Heart left ventricle (tissue), 16 donors: ENCODE measurements at regions of chr20 and their contacts with region 1.

Region 1: DNA sequence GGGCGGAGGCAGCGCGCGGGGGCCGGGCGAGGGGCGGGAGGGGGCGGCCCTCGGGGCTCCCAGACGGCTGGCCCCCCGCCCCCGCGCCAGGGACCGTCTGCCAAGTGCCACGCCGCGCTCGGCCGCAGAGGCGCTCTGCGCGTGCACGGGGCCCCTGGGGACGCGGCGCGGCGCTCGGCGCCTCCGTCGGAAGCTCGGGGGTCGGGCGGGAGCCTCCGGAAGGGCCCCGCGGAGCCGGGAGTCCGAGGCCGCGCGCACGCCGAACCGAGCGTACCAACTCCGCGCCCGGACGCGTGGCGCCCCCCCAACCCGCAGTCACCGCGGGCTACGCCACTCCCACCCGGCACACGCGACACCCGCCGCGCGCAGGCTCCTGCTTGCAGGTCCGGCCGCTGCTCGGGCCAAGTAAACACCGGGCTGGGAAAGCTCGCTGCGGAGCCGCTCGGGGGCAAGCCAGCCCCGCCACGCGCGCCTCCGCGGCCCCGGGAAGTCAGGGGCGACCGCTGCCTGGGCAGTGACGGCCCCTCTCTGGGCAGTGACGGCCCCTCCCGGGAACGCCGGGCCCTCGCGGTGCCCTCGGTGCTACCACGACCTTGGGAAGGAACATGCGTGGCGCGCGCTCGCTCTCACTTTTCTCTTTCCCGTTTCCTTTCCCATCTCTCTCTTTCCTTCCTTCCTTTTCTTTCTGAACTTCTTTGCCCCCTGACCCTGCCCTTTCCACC is 384 bp upstream of the PREX1 start:
- DNase-seq: peak; percentile 81 to 91 (median 86)
- ATAC-seq: peak; percentile 6 to 83 (median 73)
- H3K4me3 ChIP-seq: peak overlapping the region; percentile 45 to 89 (median 66)
- H3K27ac ChIP-seq: peak overlapping the region; percentile 19 to 92 (median 67)
- H3K4me1 ChIP-seq: peaks cover 0 to 69% (median 22%) of the 10 kb centered on the region in 12 donors
- H3K27me3 ChIP-seq: no peaks in the 10 kb centered on the region
- CTCF ChIP-seq: peak in 5 of 12 donors; percentile 12 to 30 (median 22)
- POLR2A ChIP-seq: peak in 1 of 2 donors; percentile 59

Region 2: GRCh38 chr20:48668451-48668952 is 159.7 kb before region 1 on chr20:
- intact Hi-C with region 1: no loop called
- DNase-seq: peak in 2 of 5 donors; percentile 45 to 49
- ATAC-seq: peak in 3 of 4 donors; percentile 45 to 77 (median 52)
- H3K4me3 ChIP-seq: no peak overlapping the region
- H3K27ac ChIP-seq: no peak overlapping the region
- H3K4me1 ChIP-seq: peaks cover 0 to 9% (median 2%) of the 10 kb centered on the region in 12 donors
- H3K27me3 ChIP-seq: no peaks in the 10 kb centered on the region
- CTCF ChIP-seq: no peak
- POLR2A ChIP-seq: no peak

Region 3: DNA sequence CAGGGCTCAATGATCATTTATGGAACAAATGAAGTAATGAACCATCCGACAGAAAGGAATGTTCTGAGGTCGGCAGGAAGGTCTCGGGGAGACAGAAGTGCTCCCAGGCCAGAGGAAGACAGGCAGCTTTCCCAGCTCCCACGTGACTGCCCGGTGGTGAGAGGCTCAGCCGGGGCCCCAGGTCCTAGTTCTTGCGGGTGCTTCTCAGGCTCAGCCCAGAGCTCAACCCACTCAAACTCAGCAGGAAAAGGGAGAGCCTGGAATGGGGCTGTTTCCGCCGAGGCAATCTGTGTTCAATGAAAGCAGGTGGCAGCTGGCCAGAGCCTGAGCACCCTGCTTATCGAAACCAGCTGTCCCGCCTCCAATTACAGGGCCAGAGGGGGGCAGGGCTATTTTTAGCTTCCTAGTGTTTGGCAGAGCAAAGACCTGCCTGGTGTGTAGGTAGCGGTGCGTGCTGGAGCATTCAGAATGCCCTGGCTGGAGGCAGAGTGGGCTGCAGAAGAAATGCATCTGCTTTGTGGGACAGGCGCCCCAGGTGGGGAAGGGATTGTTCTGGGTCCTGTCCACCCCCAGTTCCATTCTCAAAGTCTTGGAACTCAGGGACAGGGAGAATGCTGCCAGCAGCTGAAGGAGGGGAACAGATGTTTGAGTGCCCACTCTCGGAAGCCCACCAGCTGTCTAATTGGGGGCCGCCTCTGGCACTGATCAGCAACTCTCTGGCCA is 145.5 kb before region 1 on chr20:
- intact Hi-C with region 1: loop called in 9 of 10 experiments (anchors 2 to 10 kb)
- DNase-seq: peak; percentile 88 to 94 (median 90)
- ATAC-seq: peak; percentile 90 to 93 (median 92)
- H3K4me3 ChIP-seq: peak overlapping the region in 8 of 12 donors; percentile 1 to 28 (median 14)
- H3K27ac ChIP-seq: peak overlapping the region; percentile 50 to 79 (median 70)
- H3K4me1 ChIP-seq: peaks cover 19 to 62% (median 57%) of the 10 kb centered on the region in 12 donors
- H3K27me3 ChIP-seq: no peaks in the 10 kb centered on the region
- CTCF ChIP-seq: no peak
- POLR2A ChIP-seq: no peak

Region 4: DNA sequence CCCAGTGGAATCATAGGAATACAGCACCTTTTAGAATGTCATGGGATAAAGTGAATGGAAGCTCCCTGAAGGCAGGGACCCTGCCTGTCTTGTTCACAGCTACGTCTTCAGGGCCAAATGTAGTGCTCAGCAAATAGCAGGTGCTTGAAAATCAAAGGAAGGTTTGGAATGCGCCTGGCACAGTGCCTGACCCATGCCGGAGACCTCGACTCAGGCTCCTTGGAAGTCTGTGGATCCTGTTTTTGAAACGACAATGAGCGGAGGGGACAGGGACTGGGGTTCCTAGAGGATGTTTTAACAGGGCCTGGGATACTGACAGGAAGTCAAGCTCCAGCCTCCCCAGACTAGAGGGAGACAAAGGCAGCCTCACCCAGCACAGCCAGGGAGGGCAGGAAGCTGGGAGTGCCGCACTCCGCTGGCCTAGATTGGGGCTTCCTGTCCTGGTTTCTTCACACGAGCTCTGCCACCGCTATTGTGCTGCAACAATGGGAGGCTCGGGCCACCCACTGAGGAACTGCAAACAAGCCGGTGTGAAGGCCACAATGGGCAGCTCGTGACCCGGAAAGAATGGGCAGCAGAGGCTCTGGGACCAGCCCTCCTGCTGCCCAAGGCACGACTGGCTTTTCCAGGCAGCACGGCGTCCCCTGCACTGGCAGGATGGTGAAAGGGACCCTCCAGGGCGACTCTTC is 77.1 kb before region 1 on chr20:
- intact Hi-C with region 1: loop called in 2 of 10 experiments (anchors 2 to 5 kb)
- DNase-seq: peak; percentile 75 to 88 (median 78)
- ATAC-seq: peak; percentile 79 to 95 (median 89)
- H3K4me3 ChIP-seq: peak overlapping the region in 1 of 12 donors; percentile 5
- H3K27ac ChIP-seq: peak overlapping the region; percentile 40 to 85 (median 68)
- H3K4me1 ChIP-seq: peaks cover 0 to 85% (median 10%) of the 10 kb centered on the region in 12 donors
- H3K27me3 ChIP-seq: no peaks in the 10 kb centered on the region
- CTCF ChIP-seq: peak in 1 of 12 donors; percentile 6
- POLR2A ChIP-seq: no peak

Region 5: DNA sequence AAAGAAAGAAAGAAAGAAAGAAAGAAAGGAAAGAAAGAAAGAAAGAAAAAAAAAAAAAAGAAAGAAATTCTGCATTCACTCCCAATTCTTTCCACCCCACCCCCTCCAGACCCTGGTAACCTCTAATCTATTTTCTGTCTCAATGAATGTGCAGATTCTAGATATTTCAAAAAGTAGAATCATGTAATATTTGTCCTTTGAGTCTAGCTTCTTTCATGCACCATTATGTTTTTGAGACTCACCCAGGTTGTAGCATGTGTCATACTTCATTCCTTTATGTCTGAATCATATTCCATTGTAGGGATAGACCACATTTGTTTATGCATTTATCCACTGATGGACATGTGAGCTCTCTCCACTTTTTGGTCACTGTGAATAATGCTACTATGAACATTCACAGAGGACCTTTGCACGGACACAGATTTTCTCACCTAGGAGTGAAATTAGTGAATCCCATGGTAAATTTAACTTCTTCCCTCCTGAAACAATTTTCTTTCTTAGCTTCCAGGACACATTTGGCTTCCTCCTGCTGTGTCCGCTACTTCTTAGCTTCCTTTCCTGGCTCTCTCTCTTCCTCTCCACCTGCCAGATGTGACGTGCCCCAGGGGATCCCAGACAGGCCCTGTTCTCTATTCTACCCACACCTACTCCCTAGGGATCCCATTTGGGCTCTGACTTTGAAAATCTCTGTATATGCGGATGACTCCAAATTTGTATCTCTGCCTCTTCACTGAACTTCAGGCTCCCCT is 69.2 kb after region 1 on chr20:
- intact Hi-C with region 1: loop called in 4 of 10 experiments (anchors 5 to 10 kb)
- DNase-seq: no peak
- ATAC-seq: peak; percentile 55 to 82 (median 75)
- H3K4me3 ChIP-seq: no peak overlapping the region
- H3K27ac ChIP-seq: peak overlapping the region in 3 of 12 donors; percentile 6 to 59 (median 8)
- H3K4me1 ChIP-seq: peaks cover 0 to 24% (median 4%) of the 10 kb centered on the region in 12 donors
- H3K27me3 ChIP-seq: no peaks in the 10 kb centered on the region
- CTCF ChIP-seq: no peak
- POLR2A ChIP-seq: no peak

Region 6: GRCh38 chr20:48986899-48987298 is 158.7 kb after region 1 on chr20:
- intact Hi-C with region 1: no loop called
- DNase-seq: no peak
- ATAC-seq: no peak
- H3K4me3 ChIP-seq: no peak overlapping the region
- H3K27ac ChIP-seq: no peak overlapping the region
- H3K4me1 ChIP-seq: peaks cover 4 to 19% (median 10%) of the 10 kb centered on the region in 12 donors
- H3K27me3 ChIP-seq: no peaks in the 10 kb centered on the region
- CTCF ChIP-seq: peak in 2 of 12 donors; percentile 16
- POLR2A ChIP-seq: no peak

Region 7: GRCh38 chr20:49484180-49485140 is 656.3 kb after region 1 on chr20:
- intact Hi-C with region 1: no loop called
- DNase-seq: peak; percentile 75 to 89 (median 77)
- ATAC-seq: peak; percentile 73 to 92 (median 90)
- H3K4me3 ChIP-seq: peak overlapping the region in 11 of 12 donors; percentile 31 to 64 (median 48)
- H3K27ac ChIP-seq: peak overlapping the region in 1 of 12 donors; percentile 57
- H3K4me1 ChIP-seq: peaks cover 0 to 27% (median 13%) of the 10 kb centered on the region in 12 donors
- H3K27me3 ChIP-seq: peaks cover 0 to 43% (median 20%) of the 10 kb centered on the region in 9 donors
- CTCF ChIP-seq: peak; percentile 63 to 88 (median 80)
- POLR2A ChIP-seq: no peak